Psoas muscle (tissue), 8 donors: ENCODE measurements at regions of chr21 and their contacts with region 1.

Region 1: GRCh38 chr21:15483138-15483780 is 246.5 kb upstream of the USP25 start:
- DNase-seq: peak; percentile 82 to 91
- ATAC-seq: peak; percentile 98 to 100 (median 100)
- H3K4me3 ChIP-seq: no peak overlapping the region
- H3K27ac ChIP-seq: no peak overlapping the region
- H3K4me1 ChIP-seq: peaks cover 4% of the 10 kb centered on the region
- H3K27me3 ChIP-seq: no peaks in the 10 kb centered on the region
- CTCF ChIP-seq: peak; percentile 96

Region 2: GRCh38 chr21:14864211-14865021 is 618.8 kb before region 1 on chr21:
- intact Hi-C with region 1: loop called (anchors 1 to 2 kb)
- DNase-seq: peak; percentile 70 to 77
- ATAC-seq: peak; percentile 93 to 96 (median 94)
- H3K4me3 ChIP-seq: no peak overlapping the region
- H3K27ac ChIP-seq: peak overlapping the region; percentile 44
- H3K4me1 ChIP-seq: peaks cover 9% of the 10 kb centered on the region
- H3K27me3 ChIP-seq: no peaks in the 10 kb centered on the region
- CTCF ChIP-seq: peak; percentile 66

Region 3: GRCh38 chr21:14995695-14996490 is 487.4 kb before region 1 on chr21:
- intact Hi-C with region 1: loop called in 1 of 2 experiments (anchors 10 kb)
- DNase-seq: no peak
- ATAC-seq: no peak
- H3K4me3 ChIP-seq: no peak overlapping the region
- H3K27ac ChIP-seq: no peak overlapping the region
- H3K4me1 ChIP-seq: peaks cover 13% of the 10 kb centered on the region
- H3K27me3 ChIP-seq: no peaks in the 10 kb centered on the region
- CTCF ChIP-seq: no peak

Region 4: DNA sequence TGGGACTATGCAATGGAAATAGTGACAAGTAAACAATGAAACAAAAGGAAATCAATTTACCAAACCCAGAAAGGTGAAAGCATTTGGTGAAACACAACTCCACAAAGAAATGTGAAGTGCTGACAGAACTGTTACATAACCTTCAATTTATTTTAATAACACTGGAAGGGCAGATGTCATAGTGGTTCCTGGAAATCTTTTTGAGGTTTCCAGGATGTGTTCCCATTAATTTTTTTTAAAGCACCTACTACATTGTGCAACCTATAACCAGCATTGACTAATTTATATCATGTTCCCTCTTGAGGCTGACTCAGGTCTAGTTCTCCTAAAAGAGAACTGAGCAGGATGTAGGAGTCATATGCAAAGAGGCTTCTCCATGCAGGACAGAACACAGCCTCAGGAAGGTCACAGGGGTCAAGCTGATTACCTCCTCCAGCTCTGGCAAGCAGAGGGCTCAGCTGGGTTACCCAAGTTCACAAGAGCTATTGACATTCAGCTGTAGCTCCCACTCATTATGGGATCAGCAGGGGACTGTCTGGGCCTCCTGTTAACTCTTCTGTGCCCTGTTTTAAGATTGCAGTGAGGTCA is 261.4 kb before region 1 on chr21:
- intact Hi-C with region 1: loop called in 1 of 2 experiments (anchors 10 kb)
- DNase-seq: peak; percentile 50 to 57
- ATAC-seq: peak; percentile 97 to 99 (median 98)
- H3K4me3 ChIP-seq: no peak overlapping the region
- H3K27ac ChIP-seq: peak overlapping the region; percentile 55
- H3K4me1 ChIP-seq: peaks cover 26% of the 10 kb centered on the region
- H3K27me3 ChIP-seq: no peaks in the 10 kb centered on the region
- CTCF ChIP-seq: no peak

Region 5: GRCh38 chr21:15289896-15290841 is 193.1 kb before region 1 on chr21:
- intact Hi-C with region 1: no loop called
- DNase-seq: peak; percentile 46 to 79
- ATAC-seq: peak; percentile 84 to 93 (median 89)
- H3K4me3 ChIP-seq: peak overlapping the region; percentile 54
- H3K27ac ChIP-seq: no peak overlapping the region
- H3K4me1 ChIP-seq: peaks cover 10% of the 10 kb centered on the region
- H3K27me3 ChIP-seq: no peaks in the 10 kb centered on the region
- CTCF ChIP-seq: no peak

Region 6: DNA sequence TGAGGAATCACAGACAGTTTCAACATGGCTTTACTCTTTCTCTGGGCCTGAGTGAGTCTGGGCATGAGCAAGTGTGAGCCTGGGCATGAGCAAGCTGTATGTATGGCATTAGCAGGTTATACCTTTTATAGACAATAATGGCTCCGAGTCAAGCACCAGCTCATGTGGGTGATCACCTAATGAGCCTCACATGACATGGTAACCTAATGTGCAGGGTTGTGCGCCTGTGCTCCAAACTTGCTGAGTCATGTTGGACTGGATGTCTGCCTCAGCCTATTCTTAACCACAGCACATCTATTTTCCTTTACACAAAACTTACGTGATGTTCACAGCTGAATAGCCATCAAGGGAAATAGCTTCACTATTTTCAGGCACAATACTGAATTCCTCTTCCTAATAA is 182.2 kb before region 1 on chr21:
- intact Hi-C with region 1: loop called in 1 of 2 experiments (anchors 10 kb)
- DNase-seq: no peak
- ATAC-seq: peak; percentile 59 to 92 (median 88)
- H3K4me3 ChIP-seq: no peak overlapping the region
- H3K27ac ChIP-seq: peak overlapping the region; percentile 47
- H3K4me1 ChIP-seq: peaks cover 18% of the 10 kb centered on the region
- H3K27me3 ChIP-seq: no peaks in the 10 kb centered on the region
- CTCF ChIP-seq: no peak

Region 7: DNA sequence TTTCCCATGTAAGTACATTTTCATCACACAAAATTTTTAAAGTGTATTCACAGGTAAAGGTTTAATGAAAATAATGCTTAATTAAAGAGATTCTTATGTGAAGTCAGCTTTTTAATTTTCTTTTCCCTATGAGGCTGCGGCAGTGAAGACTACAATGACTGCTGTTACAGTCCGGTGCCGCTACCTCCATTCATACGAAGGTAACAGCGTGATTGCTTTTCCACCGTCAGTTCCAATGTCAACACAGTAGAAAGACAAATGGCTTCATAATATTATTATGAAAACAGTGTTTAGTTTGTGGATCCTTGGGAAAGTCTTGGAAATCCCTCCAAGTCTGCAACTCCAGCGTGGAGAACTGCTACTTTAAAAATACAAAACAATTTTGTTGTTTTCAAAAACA is 163.5 kb before region 1 on chr21:
- intact Hi-C with region 1: no loop called
- DNase-seq: no peak
- ATAC-seq: no peak
- H3K4me3 ChIP-seq: no peak overlapping the region
- H3K27ac ChIP-seq: no peak overlapping the region
- H3K4me1 ChIP-seq: no peaks in the 10 kb centered on the region
- H3K27me3 ChIP-seq: no peaks in the 10 kb centered on the region
- CTCF ChIP-seq: no peak

Region 8: DNA sequence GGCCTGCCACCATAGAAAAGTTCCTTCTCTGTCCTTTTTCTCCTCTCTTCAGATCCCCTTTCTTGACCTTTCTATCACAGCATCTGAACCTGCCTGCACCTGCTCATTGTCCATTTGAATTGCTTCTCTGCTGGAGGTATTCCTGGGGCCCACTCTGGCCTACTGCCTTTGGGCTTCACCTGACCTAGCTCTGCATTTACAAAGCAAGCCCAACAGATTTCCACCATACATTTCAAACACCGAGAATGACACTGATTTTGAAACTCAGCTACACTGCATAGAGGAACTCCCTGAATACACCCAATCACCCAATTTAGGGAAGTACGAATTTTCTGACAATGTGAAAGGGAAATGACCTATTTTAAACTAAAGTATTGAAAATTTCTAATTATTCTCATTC is 37.9 kb before region 1 on chr21:
- intact Hi-C with region 1: no loop called
- DNase-seq: no peak
- ATAC-seq: no peak
- H3K4me3 ChIP-seq: no peak overlapping the region
- H3K27ac ChIP-seq: peak overlapping the region; percentile 74
- H3K4me1 ChIP-seq: peaks cover 43% of the 10 kb centered on the region
- H3K27me3 ChIP-seq: no peaks in the 10 kb centered on the region
- CTCF ChIP-seq: no peak

Region 9: GRCh38 chr21:15631366-15631765 is 148.1 kb after region 1 on chr21:
- intact Hi-C with region 1: no loop called
- DNase-seq: no peak
- ATAC-seq: no peak
- H3K4me3 ChIP-seq: no peak overlapping the region
- H3K27ac ChIP-seq: no peak overlapping the region
- H3K4me1 ChIP-seq: no peaks in the 10 kb centered on the region
- H3K27me3 ChIP-seq: no peaks in the 10 kb centered on the region
- CTCF ChIP-seq: no peak